Transverse colon (tissue), 4 donors: ENCODE measurements at regions of chr20 and their contacts with region 1.

Region 1: GRCh38 chr20:1118336-1119127 is at the start of gene PSMF1:
- DNase-seq: peak; percentile 96
- H3K4me3 ChIP-seq: peak within 1 kb of the TSS; percentile 70 to 100 (median 78)
- H3K27ac ChIP-seq: peak within 1 kb of the TSS; percentile 82 to 91 (median 86)
- H3K4me1 ChIP-seq: peaks cover 26 to 51% (median 34%) of the 10 kb centered on the region in 4 donors
- H3K27me3 ChIP-seq: no peaks in the 10 kb centered on the region
- CTCF ChIP-seq: peak; percentile 5 to 39 (median 13)
- EP300 ChIP-seq: no peak
- POLR2A ChIP-seq: peak; percentile 68
- total RNA-seq, gene PSMF1: 55.1 to 173 (median 120) TPM

Region 2: GRCh38 chr20:815914-816606 is 302.5 kb before region 1 on chr20:
- in situ Hi-C with region 1: loop called in 1 of 4 experiments (anchors 25 kb)
- intact Hi-C with region 1: no loop called
- DNase-seq: peak; percentile 65
- H3K4me3 ChIP-seq: no peak overlapping the region
- H3K27ac ChIP-seq: no peak overlapping the region
- H3K4me1 ChIP-seq: peaks cover 0 to 3% (median 0%) of the 10 kb centered on the region in 4 donors
- H3K27me3 ChIP-seq: peaks cover 5% of the 10 kb centered on the region
- CTCF ChIP-seq: peak; percentile 96 to 99 (median 98)
- EP300 ChIP-seq: no peak
- POLR2A ChIP-seq: no peak

Region 3: GRCh38 chr20:833450-834150 is 284.9 kb before region 1 on chr20 and contains the start of gene FAM110A:
- in situ Hi-C with region 1: loop called in 1 of 4 experiments (anchors 25 kb)
- intact Hi-C with region 1: no loop called
- DNase-seq: peak; percentile 98
- H3K4me3 ChIP-seq: peak within 1 kb of the TSS; percentile 63 to 97 (median 74)
- H3K27ac ChIP-seq: peak within 1 kb of the TSS; percentile 76 to 91 (median 88)
- H3K4me1 ChIP-seq: peaks cover 3 to 23% (median 10%) of the 10 kb centered on the region in 4 donors
- H3K27me3 ChIP-seq: no peaks in the 10 kb centered on the region
- CTCF ChIP-seq: no peak
- EP300 ChIP-seq: no peak
- POLR2A ChIP-seq: peak; percentile 31
- total RNA-seq, gene FAM110A: 4.0 to 14.6 (median 6.9) TPM

Region 4: GRCh38 chr20:1212607-1213396 is 94.3 kb after region 1 on chr20:
- in situ Hi-C with region 1: loop called in 1 of 4 experiments (anchors 10 kb)
- intact Hi-C with region 1: no loop called
- DNase-seq: peak; percentile 71
- H3K4me3 ChIP-seq: no peak overlapping the region
- H3K27ac ChIP-seq: no peak overlapping the region
- H3K4me1 ChIP-seq: peaks cover 0 to 6% (median 2%) of the 10 kb centered on the region in 4 donors
- H3K27me3 ChIP-seq: peaks cover 10% of the 10 kb centered on the region
- CTCF ChIP-seq: peak; percentile 76 to 80 (median 79)
- EP300 ChIP-seq: no peak
- POLR2A ChIP-seq: no peak

Region 5: DNA sequence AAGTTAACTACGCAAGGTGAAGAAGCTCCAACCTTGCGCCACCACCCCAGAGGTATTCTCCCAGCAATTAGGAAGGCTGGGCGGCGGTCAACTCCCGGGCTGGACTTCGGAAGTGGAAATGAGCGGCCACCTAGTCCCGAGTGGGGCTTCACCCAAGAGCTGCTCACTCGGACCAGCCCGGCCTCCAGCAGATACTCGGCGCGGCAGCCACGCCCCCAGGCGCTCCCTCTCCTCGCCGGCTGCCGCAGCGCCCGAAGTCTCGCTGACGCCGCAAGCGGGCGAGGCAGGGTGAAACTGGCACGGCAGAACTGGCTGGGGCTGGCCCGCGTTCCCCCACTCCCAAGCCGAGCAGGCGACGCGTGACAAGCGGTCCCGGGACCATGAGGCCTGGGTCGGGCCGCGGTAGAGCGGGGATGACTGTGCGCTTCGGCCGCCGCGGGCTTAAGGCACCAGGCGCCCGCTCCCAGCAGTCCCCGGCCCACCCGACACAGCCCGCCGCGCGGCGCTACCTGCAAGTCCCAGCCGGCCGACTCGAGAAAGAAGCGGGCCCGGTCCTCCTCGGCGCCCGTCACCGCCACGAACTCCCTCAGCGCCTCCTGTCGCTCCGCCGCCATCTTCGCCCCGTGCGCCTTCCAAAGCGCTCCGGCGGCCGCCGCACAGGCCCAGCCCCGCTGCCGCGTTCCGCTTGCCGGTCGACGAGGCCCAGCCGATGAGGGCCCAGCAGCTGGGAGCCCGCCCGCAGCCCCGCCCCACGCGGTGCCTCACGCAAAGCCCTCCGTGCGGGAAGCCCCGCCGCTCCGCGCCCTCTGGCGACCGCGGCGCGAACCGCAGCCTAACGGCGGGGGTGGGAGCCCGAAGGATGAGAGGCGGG is 347.9 kb after region 1 on chr20 and contains the start of gene NSFL1C:
- in situ Hi-C with region 1: loop called in 2 of 4 experiments (anchors 25 kb)
- intact Hi-C with region 1: no loop called
- DNase-seq: peak; percentile 97
- H3K4me3 ChIP-seq: peak within 1 kb of the TSS; percentile 69 to 98 (median 88)
- H3K27ac ChIP-seq: peak within 1 kb of the TSS; percentile 89 to 95 (median 92)
- H3K4me1 ChIP-seq: peaks cover 11 to 61% (median 32%) of the 10 kb centered on the region in 4 donors
- H3K27me3 ChIP-seq: no peaks in the 10 kb centered on the region
- CTCF ChIP-seq: peak; percentile 66 to 99 (median 97)
- EP300 ChIP-seq: no peak
- POLR2A ChIP-seq: peak; percentile 56
- total RNA-seq, gene NSFL1C: 14.7 to 51.2 (median 48.8) TPM